Endothelial cell of umbilical vein (primary cell): ENCODE measurements at regions of chr5 and their contacts with region 1.

Region 1: DNA sequence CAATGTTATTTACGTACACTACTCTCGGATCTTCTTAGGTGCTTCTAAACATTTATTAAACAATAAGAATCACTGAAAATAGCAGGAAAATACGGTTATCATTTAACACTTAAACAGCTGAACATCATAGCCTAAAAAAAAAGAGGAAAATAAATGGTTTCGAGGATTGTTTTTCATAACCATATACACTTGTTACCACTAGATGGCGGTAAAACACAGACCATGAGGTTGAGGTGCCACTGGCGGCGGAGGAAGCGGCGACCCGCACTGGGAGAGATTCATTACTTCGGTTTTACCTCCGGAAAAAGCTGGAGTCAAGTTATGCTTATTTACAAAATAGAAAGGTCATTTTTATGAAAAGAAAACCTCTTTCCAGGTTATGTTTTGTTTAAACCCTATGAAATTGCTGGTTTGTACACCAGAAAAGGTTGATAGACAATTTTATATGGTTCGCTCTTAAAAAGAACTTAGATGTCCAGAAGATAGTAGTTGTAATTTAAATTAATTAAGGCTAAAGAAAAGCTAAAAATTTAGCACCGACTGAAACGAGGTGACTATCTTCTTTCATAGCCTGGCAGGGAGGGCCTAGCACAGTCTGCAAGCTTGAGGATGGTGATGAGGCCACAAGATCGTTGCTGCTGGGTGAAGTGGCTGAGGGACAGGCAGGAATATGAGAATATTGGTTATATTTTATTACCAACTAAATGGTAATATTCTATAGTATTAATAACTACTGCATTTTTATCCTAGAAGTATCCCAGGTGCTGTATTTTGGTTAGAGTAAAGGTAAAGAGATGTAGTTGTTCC is 605.7 kb downstream of the RAB3C start:
- DNase-seq: peak; percentile 73
- H3K4me3 ChIP-seq: peak overlapping the region in 1 of 3 experiments; percentile 33
- H3K27ac ChIP-seq: no peak overlapping the region
- H3K4me1 ChIP-seq: peaks cover 4% of the 10 kb centered on the region
- H3K27me3 ChIP-seq: no peaks in the 10 kb centered on the region
- CTCF ChIP-seq: peak; percentile 47 to 55
- POLR2A ChIP-seq: no peak

Region 2: GRCh38 chr5:59079622-59080620 is 108.7 kb before region 1 on chr5:
- CTCF ChIA-PET with region 1: no interaction called
- POLR2A ChIA-PET with region 1: no interaction called
- dilution Hi-C with region 1: no loop called
- intact Hi-C with region 1: no loop called
- DNase-seq: peak; percentile 69
- H3K4me3 ChIP-seq: no peak overlapping the region
- H3K27ac ChIP-seq: peak overlapping the region; percentile 14
- H3K4me1 ChIP-seq: peaks cover 7% of the 10 kb centered on the region
- H3K27me3 ChIP-seq: no peaks in the 10 kb centered on the region
- CTCF ChIP-seq: no peak
- POLR2A ChIP-seq: no peak

Region 3: DNA sequence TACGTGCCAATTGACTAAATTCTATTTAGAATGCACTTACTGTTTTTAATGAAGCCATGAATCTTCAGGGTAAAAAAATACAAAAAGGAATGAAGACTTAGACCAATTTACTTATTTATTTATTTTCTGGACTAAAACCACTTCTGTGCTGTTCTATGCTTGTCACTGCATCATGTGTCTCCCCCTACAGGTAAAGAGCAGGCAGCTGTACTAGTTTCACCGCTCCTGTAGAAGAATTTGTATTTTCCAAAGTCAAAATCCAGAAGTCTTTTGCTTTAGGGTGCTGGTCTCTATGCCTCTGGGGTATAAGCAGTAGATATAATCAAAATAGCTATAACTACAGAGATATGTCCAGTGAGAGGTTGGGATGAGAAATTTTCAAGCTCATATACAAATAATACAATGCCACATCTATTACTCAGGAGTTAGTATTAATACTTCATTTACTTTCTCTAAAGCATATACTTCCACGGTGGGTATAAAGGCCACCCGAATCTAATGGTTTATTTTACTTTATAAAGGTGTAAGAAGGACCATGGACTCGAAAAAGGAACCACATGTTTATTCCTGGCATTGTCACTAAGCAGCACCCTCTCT is 14.3 kb before region 1 on chr5:
- CTCF ChIA-PET with region 1: interaction called, 19 read pairs
- POLR2A ChIA-PET with region 1: no interaction called
- dilution Hi-C with region 1: no loop called
- intact Hi-C with region 1: no loop called
- DNase-seq: peak; percentile 64
- H3K4me3 ChIP-seq: no peak overlapping the region
- H3K27ac ChIP-seq: no peak overlapping the region
- H3K4me1 ChIP-seq: no peaks in the 10 kb centered on the region
- H3K27me3 ChIP-seq: no peaks in the 10 kb centered on the region
- CTCF ChIP-seq: peak; percentile 63 to 68
- POLR2A ChIP-seq: no peak

Region 4: DNA sequence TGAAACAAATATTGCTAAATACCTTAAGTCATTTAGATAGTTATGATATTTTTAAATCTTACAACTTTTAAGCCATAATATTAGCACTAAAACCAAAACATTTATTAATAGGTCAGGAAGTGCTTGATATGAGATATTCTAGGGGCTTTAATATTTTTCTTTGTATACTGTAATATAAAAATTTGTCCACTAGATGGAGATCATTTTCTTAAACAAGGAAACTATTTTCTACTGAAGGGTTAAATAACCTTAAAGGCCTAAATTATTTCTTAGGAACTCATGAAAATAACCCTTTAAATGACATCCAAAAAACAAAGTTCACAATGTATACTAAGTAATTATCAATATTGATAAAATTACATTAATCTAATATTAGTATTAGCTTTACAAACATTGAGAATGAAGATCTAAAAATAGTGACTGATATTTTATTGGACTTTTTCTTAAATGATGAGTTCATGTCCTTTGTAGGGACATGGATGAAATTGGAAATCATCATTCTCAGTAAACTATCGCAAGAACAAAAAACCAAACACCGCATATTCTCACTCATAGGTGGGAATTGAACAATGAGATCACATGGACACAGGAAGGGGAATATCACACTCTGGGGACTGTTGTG is 29.9 kb after region 1 on chr5:
- CTCF ChIA-PET with region 1: interaction called, 11 read pairs
- POLR2A ChIA-PET with region 1: no interaction called
- dilution Hi-C with region 1: no loop called
- intact Hi-C with region 1: no loop called
- DNase-seq: peak; percentile 54
- H3K4me3 ChIP-seq: no peak overlapping the region
- H3K27ac ChIP-seq: no peak overlapping the region
- H3K4me1 ChIP-seq: peaks cover 19% of the 10 kb centered on the region
- H3K27me3 ChIP-seq: no peaks in the 10 kb centered on the region
- CTCF ChIP-seq: peak in 1 of 2 donors; percentile 2
- POLR2A ChIP-seq: no peak

Region 5: DNA sequence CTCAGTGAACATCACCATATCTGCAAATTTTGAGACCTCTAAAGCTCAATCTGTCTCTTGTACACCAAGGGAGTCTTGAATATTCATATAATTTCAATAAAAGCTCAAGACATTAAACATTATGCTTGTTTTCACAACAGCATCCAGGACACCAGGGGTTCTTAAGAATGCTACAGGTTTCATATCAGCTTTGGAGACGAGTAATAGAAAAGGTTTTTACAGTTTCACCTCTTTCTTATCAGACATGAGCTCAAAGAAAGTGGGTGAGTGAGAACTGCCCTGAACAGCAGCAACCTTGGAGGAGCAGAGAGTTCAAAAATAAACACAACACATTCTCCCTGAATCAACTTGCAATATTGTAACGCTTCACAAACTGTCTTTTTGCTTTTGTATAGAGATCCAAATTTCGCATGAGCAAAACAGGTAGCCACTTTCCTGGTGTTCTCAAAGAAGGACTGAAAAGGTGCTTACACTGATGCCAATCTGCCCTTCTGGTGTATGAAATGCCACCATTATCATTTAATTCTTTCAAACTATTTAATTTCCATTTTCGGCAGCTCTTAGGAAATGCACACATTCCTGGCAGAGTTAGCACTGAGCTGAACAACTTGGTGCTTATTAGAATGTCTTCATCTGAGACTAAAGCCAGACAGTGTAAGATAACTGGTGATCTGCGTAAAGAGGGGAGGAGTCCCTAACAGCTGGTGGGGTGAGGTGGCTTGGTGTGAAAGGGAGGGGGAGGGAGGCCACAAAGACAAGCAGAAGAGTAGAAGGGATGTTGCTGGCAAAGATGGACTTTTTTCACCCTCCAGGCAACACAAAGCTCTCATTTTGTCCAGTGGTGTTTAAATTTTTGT is 169.6 kb after region 1 on chr5:
- CTCF ChIA-PET with region 1: interaction called, 21 read pairs
- POLR2A ChIA-PET with region 1: no interaction called
- dilution Hi-C with region 1: no loop called
- intact Hi-C with region 1: no loop called
- DNase-seq: no peak
- H3K4me3 ChIP-seq: no peak overlapping the region
- H3K27ac ChIP-seq: no peak overlapping the region
- H3K4me1 ChIP-seq: peaks cover 11% of the 10 kb centered on the region
- H3K27me3 ChIP-seq: no peaks in the 10 kb centered on the region
- CTCF ChIP-seq: no peak
- POLR2A ChIP-seq: no peak

Region 6: GRCh38 chr5:59390074-59390659 is 201.5 kb after region 1 on chr5:
- CTCF ChIA-PET with region 1: interaction called, 13 read pairs
- POLR2A ChIA-PET with region 1: no interaction called
- dilution Hi-C with region 1: no loop called
- intact Hi-C with region 1: no loop called
- DNase-seq: peak; percentile 40
- H3K4me3 ChIP-seq: no peak overlapping the region
- H3K27ac ChIP-seq: no peak overlapping the region
- H3K4me1 ChIP-seq: no peaks in the 10 kb centered on the region
- H3K27me3 ChIP-seq: no peaks in the 10 kb centered on the region
- CTCF ChIP-seq: peak; percentile 26 to 33
- POLR2A ChIP-seq: no peak

Region 7: GRCh38 chr5:59660737-59661136 is 472.1 kb after region 1 on chr5:
- CTCF ChIA-PET with region 1: interaction called, 8 read pairs
- POLR2A ChIA-PET with region 1: no interaction called
- dilution Hi-C with region 1: no loop called
- intact Hi-C with region 1: loop called (anchors 5 kb)
- DNase-seq: peak; percentile 52
- H3K4me3 ChIP-seq: no peak overlapping the region
- H3K27ac ChIP-seq: no peak overlapping the region
- H3K4me1 ChIP-seq: peaks cover 21% of the 10 kb centered on the region
- H3K27me3 ChIP-seq: no peaks in the 10 kb centered on the region
- CTCF ChIP-seq: peak; percentile 22 to 27
- POLR2A ChIP-seq: no peak